ENCODE measurements at regions of chr10 and their contacts with region 1.

Region 1: DNA sequence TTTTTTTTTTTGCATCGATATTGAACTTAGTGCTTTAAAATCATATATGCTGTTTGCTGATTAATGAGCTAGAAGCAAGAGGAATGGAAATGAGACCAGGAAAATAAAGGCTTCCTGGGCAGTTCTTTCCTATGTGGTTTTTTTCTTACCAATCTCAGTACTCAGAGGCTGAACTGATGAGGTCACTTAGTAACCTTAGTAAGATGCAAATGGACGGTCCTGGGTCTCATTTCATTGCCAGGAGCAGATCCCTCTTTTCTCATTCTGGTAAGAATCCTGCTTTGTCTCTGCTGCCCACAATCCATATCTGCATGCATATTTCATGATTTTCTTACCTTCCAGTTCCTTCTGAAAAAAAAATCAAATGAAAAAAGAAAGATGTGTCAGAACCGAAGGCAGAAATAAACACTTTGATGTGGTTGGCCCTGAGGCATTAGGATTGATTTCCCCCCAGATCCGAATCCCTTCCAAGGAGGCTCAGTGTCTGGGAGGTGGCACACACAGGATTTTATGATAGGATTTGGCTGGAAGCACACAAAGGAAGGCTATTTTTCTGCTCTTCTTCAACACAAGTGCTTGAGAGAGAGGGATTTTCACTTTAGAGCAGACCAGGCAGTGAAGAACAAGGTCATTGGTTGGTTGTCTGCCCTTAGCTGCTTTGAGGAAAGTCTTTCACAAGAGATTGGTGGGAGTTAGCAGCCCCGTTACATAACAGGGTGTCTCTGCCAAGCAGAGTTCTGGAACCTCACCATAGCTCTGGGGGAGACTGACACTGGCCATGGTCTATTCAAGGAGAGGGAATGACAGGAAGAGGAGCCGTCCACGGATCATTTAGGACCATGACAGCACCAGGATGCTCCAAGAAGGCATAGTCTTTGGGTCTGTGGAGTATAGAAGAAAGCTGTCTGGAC is 150.0 kb downstream of the CAMK1D start:
- DNase-seq: no peak
- H3K4me3 ChIP-seq: no peak overlapping the region
- H3K27ac ChIP-seq: no peak overlapping the region
- H3K4me1 ChIP-seq: peaks cover 0 to 6% of the 10 kb centered on the region in 2 donors
- H3K27me3 ChIP-seq: no peaks in the 10 kb centered on the region
- CTCF ChIP-seq: no peak
- POLR2A ChIP-seq: no peak

Region 2: GRCh38 chr10:11515596-11516430 is 983.5 kb before region 1 on chr10:
- intact Hi-C with region 1: no loop called
- DNase-seq: peak in 1 of 2 donors; percentile 46
- H3K4me3 ChIP-seq: no peak overlapping the region
- H3K27ac ChIP-seq: no peak overlapping the region
- H3K4me1 ChIP-seq: no peaks in the 10 kb centered on the region
- H3K27me3 ChIP-seq: no peaks in the 10 kb centered on the region
- CTCF ChIP-seq: peak; percentile 15 to 83 (median 81)
- POLR2A ChIP-seq: no peak

Region 3: DNA sequence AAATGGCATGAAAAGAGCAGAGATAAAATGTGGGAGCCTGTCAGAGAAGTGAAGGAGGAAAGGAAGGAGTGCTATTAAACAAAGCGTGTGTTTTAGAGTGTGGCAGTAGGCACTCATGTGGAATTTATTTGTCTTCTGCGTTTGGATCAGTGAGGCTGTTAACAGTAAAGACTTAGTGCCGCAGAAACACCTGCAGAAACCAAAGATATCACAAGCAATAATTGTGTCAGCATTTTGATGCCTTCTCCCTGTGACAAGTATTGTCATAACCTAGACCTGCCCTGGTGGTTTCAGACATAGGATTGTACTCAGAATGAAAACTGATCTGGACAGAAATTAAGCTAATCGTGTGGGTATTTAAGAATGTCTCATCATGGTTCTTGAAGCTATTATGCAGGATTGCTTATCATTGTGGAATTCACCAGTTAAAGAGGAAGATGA is 41.0 kb after region 1 on chr10:
- intact Hi-C with region 1: no loop called
- DNase-seq: no peak
- H3K4me3 ChIP-seq: no peak overlapping the region
- H3K27ac ChIP-seq: no peak overlapping the region
- H3K4me1 ChIP-seq: no peaks in the 10 kb centered on the region
- H3K27me3 ChIP-seq: no peaks in the 10 kb centered on the region
- CTCF ChIP-seq: no peak
- POLR2A ChIP-seq: no peak

Region 4: DNA sequence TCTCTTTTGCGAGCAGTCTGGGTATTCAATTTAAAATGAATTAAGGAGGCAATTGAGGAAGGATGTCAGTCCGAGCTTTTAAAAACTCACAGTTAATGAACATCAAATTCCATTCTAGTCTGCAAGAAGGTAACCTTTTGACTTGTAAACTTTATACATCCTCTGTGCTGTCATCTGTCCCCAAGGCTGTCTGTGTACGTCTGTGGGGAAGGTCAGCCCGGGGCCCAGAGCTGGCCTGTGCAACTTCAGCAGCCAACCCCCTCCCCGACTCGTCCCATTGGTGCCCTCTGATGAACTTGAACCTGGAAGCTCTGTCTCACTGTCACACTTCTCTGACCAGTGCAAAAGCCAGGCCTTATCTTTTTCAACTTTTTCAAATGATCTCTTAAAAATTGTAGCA is 421.8 kb after region 1 on chr10:
- intact Hi-C with region 1: no loop called
- DNase-seq: no peak
- H3K4me3 ChIP-seq: no peak overlapping the region
- H3K27ac ChIP-seq: no peak overlapping the region
- H3K4me1 ChIP-seq: no peaks in the 10 kb centered on the region
- H3K27me3 ChIP-seq: no peaks in the 10 kb centered on the region
- CTCF ChIP-seq: no peak
- POLR2A ChIP-seq: no peak

Region 5: GRCh38 chr10:13087986-13088618 is 588.8 kb after region 1 on chr10:
- intact Hi-C with region 1: no loop called
- DNase-seq: no peak
- H3K4me3 ChIP-seq: no peak overlapping the region
- H3K27ac ChIP-seq: no peak overlapping the region
- H3K4me1 ChIP-seq: no peaks in the 10 kb centered on the region
- H3K27me3 ChIP-seq: no peaks in the 10 kb centered on the region
- CTCF ChIP-seq: no peak
- POLR2A ChIP-seq: no peak

Region 6: DNA sequence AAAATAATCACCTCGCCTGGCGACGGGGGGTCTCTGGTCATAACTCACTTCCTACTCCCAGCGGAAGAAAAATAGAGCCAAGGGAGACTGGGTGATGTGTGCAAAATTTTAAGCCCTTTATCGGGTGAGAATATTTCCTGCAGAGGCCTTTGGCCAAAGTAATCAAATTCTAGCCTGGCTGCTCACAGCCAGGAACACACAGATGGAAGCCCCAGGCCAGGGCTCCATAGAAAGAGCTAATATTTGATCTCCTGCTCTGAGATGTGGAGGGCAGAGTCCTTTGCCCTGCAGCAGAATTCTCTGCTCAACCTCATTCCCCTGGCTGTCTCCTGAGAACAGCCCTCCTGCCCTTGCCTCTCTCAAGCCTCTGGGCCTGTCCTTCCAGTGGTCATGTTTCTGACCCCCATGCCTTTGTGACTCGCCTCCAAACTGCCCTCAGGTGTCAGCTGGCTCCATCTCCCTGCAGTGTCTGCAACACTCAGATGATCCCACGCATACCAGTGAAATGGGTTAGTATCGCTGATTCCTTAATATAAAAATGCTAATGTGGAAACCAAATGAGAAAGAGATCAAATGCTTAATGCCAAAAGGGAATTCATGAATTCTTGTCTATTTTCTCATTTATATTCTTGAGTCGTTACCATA is 1796.9 kb after region 1 on chr10:
- intact Hi-C with region 1: loop called (anchors 5 kb)
- DNase-seq: peak in 1 of 2 donors; percentile 54
- H3K4me3 ChIP-seq: no peak overlapping the region
- H3K27ac ChIP-seq: no peak overlapping the region
- H3K4me1 ChIP-seq: no peaks in the 10 kb centered on the region
- H3K27me3 ChIP-seq: no peaks in the 10 kb centered on the region
- CTCF ChIP-seq: no peak
- POLR2A ChIP-seq: no peak

Measured in breast epithelium (tissue), 4 donors.